ENCODE measurements at regions of chr2 and their contacts with region 1.

Region 1: DNA sequence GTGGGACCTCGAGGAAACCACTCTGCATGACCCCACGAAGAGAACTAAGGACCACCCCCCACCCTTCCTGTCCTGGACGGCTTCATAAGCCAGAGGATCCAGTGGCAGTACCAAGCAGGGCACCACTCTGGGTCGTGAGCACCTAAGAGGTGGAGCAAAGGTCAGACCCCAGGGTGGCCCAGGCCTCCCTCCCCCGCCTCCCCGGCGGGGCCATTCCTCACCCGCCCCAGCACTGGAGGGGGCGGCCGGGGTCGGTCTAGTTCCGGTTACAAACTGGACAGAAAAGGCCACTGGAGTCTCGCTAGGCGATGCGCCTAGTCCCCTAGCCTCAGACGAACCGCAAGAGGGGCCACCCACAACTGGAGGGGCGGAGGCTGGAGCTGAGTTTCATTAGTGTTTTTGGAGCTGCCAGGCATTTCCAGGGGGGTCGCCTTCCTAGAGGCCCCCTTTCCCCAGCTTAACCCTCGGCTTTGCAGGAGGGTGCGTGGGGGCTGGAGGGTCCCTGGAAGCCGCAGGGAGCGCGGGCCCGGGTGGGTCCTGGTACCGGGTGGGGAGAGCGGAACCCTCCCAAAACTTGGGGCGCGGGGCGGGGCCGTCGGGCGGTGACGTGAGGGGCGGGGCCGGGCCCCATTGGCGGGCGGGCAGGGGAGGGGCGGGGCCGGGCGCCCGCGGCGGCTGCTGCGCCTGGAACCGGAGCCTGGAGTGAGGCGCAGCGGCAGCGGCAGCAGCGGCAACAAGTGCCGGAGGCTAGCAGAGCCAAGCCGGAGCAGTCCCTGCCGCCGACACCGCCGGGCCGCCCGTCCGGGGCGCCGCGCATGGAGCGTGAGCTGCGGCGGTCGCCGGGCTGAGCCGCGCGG is at the start of gene B3GNT2:
- DNase-seq: peak; percentile 84 to 95 (median 94)
- ATAC-seq: peak; percentile 89 to 94
- H3K4me3 ChIP-seq: peak within 1 kb of the TSS; percentile 95
- H3K27ac ChIP-seq: peak within 1 kb of the TSS; percentile 93
- H3K4me1 ChIP-seq: no peaks in the 10 kb centered on the region
- H3K27me3 ChIP-seq: no peaks in the 10 kb centered on the region
- total RNA-seq, gene B3GNT2: 14.5 to 17.4 (median 17.0) TPM

Region 2: DNA sequence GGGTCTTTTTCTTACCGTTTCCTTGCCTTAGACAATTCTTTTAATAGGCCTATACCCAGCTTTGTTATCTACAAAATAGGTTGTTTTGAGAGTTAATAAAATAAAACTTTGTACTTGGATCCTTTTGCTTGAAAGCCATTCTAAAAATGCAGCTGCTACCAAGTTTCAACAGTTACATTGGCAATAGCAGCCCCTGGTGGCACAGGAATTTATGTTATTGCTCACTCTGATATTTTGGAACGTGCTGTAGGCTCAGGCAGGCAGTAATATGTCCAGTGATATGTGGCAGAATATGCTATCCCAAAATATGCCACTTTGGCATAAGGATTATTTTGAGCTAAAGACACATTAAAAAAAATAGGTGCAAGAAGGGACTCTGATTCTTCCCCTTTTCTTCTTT is 296.8 kb before region 1 on chr2:
- intact Hi-C with region 1: no loop called
- DNase-seq: no peak
- ATAC-seq: no peak
- H3K4me3 ChIP-seq: no peak overlapping the region
- H3K27ac ChIP-seq: no peak overlapping the region
- H3K4me1 ChIP-seq: no peaks in the 10 kb centered on the region
- H3K27me3 ChIP-seq: no peaks in the 10 kb centered on the region

Region 3: DNA sequence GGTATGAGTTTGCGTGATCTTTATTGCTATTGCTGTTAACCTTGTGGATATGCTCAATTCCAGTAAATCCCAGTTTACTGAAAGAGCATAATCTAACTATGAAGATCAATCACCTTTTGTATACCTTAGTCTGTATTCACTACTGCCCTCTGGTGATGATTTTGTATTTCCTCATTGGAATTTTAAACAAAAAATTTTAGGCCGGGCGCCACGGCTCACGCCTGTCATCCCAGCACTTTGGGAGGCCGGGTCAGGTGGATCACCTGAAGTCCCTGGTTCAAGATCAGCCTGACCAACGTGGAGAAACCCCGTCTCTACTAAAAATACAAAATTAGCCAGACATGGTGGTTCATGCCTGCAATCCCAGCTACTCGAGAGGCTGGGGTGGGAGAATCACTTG is 285.0 kb before region 1 on chr2:
- intact Hi-C with region 1: loop called in 1 of 4 experiments (anchors 10 kb)
- DNase-seq: no peak
- ATAC-seq: no peak
- H3K4me3 ChIP-seq: no peak overlapping the region
- H3K27ac ChIP-seq: no peak overlapping the region
- H3K4me1 ChIP-seq: no peaks in the 10 kb centered on the region
- H3K27me3 ChIP-seq: no peaks in the 10 kb centered on the region

Region 4: GRCh38 chr2:61993444-61994024 is 202.1 kb before region 1 on chr2:
- intact Hi-C with region 1: loop called in 1 of 4 experiments (anchors 5 kb)
- DNase-seq: no peak
- ATAC-seq: peak; percentile 64 to 76
- H3K4me3 ChIP-seq: no peak overlapping the region
- H3K27ac ChIP-seq: no peak overlapping the region
- H3K4me1 ChIP-seq: peaks cover 3% of the 10 kb centered on the region
- H3K27me3 ChIP-seq: no peaks in the 10 kb centered on the region

Region 5: DNA sequence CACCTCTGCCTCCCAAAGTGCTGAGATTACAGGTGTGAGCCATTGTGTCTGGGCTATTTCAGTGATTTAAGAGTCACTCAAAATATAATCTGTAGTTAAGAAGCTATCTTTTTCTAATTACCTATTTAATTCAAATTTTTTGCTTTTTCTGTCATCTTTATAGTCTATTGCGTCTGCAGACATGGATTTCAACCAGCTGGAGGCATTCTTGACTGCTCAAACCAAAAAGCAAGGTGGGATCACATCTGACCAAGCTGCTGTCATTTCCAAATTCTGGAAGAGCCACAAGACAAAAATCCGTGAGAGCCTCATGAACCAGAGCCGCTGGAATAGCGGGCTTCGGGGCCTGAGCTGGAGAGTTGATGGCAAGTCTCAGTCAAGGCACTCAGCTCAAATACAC is 195.1 kb before region 1 on chr2:
- intact Hi-C with region 1: loop called in 2 of 4 experiments (anchors 5 to 10 kb)
- DNase-seq: no peak
- ATAC-seq: no peak
- H3K4me3 ChIP-seq: no peak overlapping the region
- H3K27ac ChIP-seq: no peak overlapping the region
- H3K4me1 ChIP-seq: peaks cover 2% of the 10 kb centered on the region
- H3K27me3 ChIP-seq: no peaks in the 10 kb centered on the region

Region 6: DNA sequence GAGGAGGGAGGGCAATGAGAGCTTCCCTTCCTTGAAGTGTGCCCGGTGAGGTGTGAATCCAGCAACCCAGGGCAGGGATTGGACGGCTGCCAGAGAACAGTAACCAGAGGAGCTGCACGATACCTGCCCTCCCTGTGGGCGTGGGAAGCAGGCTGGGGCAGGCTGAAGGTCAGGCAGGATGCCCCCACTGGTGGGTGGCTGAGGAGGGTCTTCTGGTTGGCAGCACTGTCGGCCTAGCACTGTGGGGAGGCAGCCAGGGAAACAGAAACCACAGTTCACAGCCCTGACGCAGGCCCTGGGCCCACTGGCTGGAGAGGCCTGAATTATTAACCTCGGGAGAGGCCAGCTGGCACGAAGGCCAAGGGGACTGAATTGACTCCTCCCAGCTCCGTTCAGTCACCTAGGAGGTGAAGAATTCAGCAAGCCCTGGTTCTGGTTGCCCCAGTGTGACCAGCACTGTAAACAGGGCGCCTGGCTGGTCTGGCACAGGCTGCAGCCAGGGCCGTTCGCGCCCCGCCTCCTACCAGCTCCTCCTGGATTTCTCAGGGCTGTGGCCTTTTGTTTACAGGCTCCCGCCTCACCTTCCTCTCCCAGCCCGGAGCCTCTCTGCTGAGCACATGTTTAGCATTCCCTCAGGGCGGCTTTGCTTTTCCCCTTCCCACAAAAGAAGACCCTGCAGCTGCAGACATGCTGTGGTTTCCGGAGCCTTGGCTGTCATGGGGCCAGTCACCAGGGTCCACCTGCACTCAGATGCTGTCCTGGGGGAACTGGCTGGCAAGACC is 98.0 kb after region 1 on chr2:
- intact Hi-C with region 1: loop called in 1 of 4 experiments (anchors 5 kb)
- DNase-seq: peak; percentile 44 to 82 (median 76)
- ATAC-seq: peak; percentile 78 to 82
- H3K4me3 ChIP-seq: no peak overlapping the region
- H3K27ac ChIP-seq: peak overlapping the region; percentile 6
- H3K4me1 ChIP-seq: peaks cover 10% of the 10 kb centered on the region
- H3K27me3 ChIP-seq: no peaks in the 10 kb centered on the region

Region 7: DNA sequence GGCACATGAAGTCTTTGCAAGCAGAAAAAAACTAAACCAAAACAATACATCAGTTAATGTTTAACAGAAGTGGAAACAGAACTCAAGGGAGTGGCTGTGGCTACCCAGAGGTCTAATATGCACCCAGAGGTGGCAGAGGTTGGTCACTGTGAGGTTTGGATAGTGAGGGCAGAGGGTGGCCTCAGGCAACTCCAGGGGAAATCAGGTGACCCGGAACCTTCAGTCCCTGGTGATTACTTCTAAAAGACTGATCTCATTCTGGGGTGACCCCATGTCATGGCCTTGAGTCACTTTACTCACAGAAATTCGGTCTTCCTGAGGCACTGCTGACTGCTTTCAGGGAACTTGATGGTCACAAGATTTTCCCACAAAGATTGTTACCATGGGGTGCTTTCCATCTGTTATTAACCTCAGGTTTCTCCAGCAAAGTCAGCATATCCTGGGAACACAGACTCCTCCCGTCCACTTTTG is 211.0 kb after region 1 on chr2:
- intact Hi-C with region 1: loop called in 2 of 4 experiments (anchors 10 kb)
- DNase-seq: no peak
- ATAC-seq: no peak
- H3K4me3 ChIP-seq: no peak overlapping the region
- H3K27ac ChIP-seq: no peak overlapping the region
- H3K4me1 ChIP-seq: no peaks in the 10 kb centered on the region
- H3K27me3 ChIP-seq: no peaks in the 10 kb centered on the region

Region 8: DNA sequence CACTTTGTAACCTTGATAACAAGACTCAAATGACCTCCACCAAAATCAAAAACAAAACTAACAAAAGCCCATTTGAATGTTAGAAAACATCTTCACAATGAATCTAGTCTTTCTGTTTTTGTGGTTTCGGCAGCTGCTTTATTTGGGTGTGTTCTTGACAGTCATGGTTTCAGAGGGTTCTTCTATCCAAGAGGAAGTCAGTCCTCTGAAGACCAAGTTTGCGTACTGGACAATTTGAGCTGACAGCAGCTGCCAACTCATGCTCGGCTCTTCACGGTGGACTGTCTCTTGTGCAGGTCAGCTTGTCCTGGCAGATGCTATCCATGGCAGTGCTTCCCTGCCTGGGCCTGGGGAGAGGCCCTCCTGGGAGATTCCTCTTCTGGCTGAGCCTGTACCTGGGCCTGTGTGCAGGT is 219.4 kb after region 1 on chr2:
- intact Hi-C with region 1: loop called in 1 of 4 experiments (anchors 10 kb)
- DNase-seq: no peak
- ATAC-seq: peak in 1 of 2 donors; percentile 9
- H3K4me3 ChIP-seq: no peak overlapping the region
- H3K27ac ChIP-seq: no peak overlapping the region
- H3K4me1 ChIP-seq: no peaks in the 10 kb centered on the region
- H3K27me3 ChIP-seq: no peaks in the 10 kb centered on the region